CD4-positive, alpha-beta memory T cell (primary cell): ENCODE measurements at regions of chr5 and their contacts with region 1.

Region 1: GRCh38 chr5:159331093-159331973 is 1.0 kb upstream of the IL12B start:
- DNase-seq: peak; percentile 72 to 79 (median 74)
- H3K4me3 ChIP-seq: peak overlapping the region in 1 of 2 donors; percentile 46
- H3K4me3 Mint-ChIP-seq: peak overlapping the region; percentile 73 to 87 (median 80)
- H3K27ac ChIP-seq: peak overlapping the region; percentile 23
- H3K27ac Mint-ChIP-seq: peak overlapping the region; percentile 47 to 88 (median 80)
- H3K4me1 ChIP-seq: peaks cover 19% of the 10 kb centered on the region
- H3K4me1 Mint-ChIP-seq: peaks cover 15 to 39% (median 27%) of the 10 kb centered on the region in 4 donors
- H3K27me3 ChIP-seq: no peaks in the 10 kb centered on the region
- H3K27me3 Mint-ChIP-seq: peaks cover 0 to 2% of the 10 kb centered on the region in 2 donors

Region 2: DNA sequence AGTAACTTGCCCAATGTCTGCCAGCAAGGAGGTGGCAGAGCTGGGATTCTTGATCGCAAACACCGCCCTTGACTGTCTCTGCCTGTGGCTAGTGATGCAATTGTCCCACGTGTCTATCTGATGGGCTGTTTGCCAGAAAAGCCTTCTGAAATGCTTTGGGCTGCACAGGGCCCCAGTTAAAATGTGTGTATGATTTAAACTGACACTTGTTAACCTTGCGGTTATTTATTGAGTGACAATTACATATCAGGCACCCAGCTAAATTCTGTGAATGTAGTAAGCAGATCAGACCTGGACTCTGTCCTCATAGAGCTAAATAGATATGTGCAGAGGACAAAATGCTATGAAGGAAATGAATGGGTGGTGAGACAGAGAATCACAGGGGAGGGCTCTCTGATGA is 10.6 kb after region 1 on chr5:
- CTCF ChIA-PET with region 1: interaction called, 18 read pairs
- POLR2A ChIA-PET with region 1: interaction called, 3 read pairs
- intact Hi-C with region 1: no loop called
- DNase-seq: peak; percentile 74 to 92 (median 79)
- H3K4me3 ChIP-seq: no peak overlapping the region
- H3K4me3 Mint-ChIP-seq: peak overlapping the region in 7 of 8 donors; percentile 28 to 88 (median 47)
- H3K27ac ChIP-seq: no peak overlapping the region
- H3K27ac Mint-ChIP-seq: peak overlapping the region; percentile 79 to 98 (median 87)
- H3K4me1 ChIP-seq: peaks cover 66% of the 10 kb centered on the region
- H3K4me1 Mint-ChIP-seq: peaks cover 54 to 89% (median 67%) of the 10 kb centered on the region in 4 donors
- H3K27me3 ChIP-seq: no peaks in the 10 kb centered on the region
- H3K27me3 Mint-ChIP-seq: no peaks in the 10 kb centered on the region

Region 3: GRCh38 chr5:159427180-159428012 is 96.1 kb after region 1 on chr5:
- CTCF ChIA-PET with region 1: interaction called, 5 read pairs
- POLR2A ChIA-PET with region 1: no interaction called
- intact Hi-C with region 1: loop called (anchors 5 kb)
- DNase-seq: peak in 1 of 5 donors; percentile 25
- H3K4me3 ChIP-seq: no peak overlapping the region
- H3K4me3 Mint-ChIP-seq: peak overlapping the region in 6 of 8 donors; percentile 3 to 71 (median 31)
- H3K27ac ChIP-seq: no peak overlapping the region
- H3K27ac Mint-ChIP-seq: peak overlapping the region; percentile 1 to 92 (median 78)
- H3K4me1 ChIP-seq: peaks cover 21% of the 10 kb centered on the region
- H3K4me1 Mint-ChIP-seq: peaks cover 14 to 38% (median 22%) of the 10 kb centered on the region in 4 donors
- H3K27me3 ChIP-seq: no peaks in the 10 kb centered on the region
- H3K27me3 Mint-ChIP-seq: peaks cover 1% of the 10 kb centered on the region in 2 donors

Region 4: DNA sequence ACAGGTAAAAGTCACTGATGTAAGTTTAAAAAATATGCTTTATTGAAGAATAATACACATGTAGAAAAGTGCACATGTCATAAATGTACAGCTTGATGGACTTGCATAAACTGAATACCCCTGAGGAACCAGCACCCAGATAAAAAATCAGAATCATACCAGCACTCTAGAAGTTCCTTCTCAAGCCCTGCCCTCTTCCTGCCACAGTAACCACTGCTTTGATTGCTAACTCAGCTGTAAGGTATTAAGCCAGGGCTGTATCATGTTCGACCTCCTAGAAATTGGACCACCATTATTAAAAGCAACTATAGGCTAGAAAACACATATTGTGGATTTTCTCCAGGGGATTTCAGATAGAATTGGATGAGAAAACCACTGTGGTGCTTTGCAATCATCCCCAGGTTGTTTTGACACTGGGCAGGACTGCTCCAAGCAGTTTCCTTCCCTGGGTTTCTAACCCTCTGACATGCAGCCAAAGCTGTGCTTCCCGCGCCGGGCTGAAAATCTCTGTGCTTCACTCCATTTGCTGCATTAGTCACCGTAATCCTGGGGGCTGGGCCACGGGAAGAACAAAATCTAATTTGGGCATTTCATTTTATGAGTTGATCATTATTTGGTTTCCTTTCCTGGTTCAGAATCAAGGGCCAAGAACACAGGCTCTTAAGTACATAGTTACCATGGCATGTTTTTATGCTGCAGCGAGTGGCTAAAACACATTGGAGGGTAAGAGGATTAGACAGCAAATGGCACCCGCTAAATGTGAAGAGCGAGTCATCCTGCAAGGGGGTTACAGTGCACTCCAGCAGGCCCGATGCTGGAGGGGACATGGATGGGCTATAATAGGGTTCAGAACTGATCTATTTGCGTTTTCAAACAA is 138.4 kb after region 1 on chr5:
- CTCF ChIA-PET with region 1: no interaction called
- POLR2A ChIA-PET with region 1: no interaction called
- intact Hi-C with region 1: loop called (anchors 1 kb)
- DNase-seq: peak; percentile 11 to 49 (median 38)
- H3K4me3 ChIP-seq: peak overlapping the region in 1 of 2 donors; percentile 40
- H3K4me3 Mint-ChIP-seq: peak overlapping the region; percentile 44 to 75 (median 67)
- H3K27ac ChIP-seq: no peak overlapping the region
- H3K27ac Mint-ChIP-seq: peak overlapping the region in 5 of 7 donors; percentile 24 to 55 (median 42)
- H3K4me1 ChIP-seq: peaks cover 22% of the 10 kb centered on the region
- H3K4me1 Mint-ChIP-seq: peaks cover 16 to 32% (median 24%) of the 10 kb centered on the region in 4 donors
- H3K27me3 ChIP-seq: no peaks in the 10 kb centered on the region
- H3K27me3 Mint-ChIP-seq: no peaks in the 10 kb centered on the region

Region 5: GRCh38 chr5:159915904-159916840 is 584.8 kb after region 1 on chr5 and contains the start of gene ADRA1B:
- CTCF ChIA-PET with region 1: no interaction called
- POLR2A ChIA-PET with region 1: no interaction called
- intact Hi-C with region 1: loop called (anchors 1 kb)
- DNase-seq: peak in 4 of 5 donors; percentile 17 to 32 (median 26)
- H3K4me3 ChIP-seq: no peak within 1 kb of the TSS
- H3K4me3 Mint-ChIP-seq: peak within 1 kb of the TSS; percentile 7 to 82 (median 68)
- H3K27ac ChIP-seq: no peak within 1 kb of the TSS
- H3K27ac Mint-ChIP-seq: peak within 1 kb of the TSS in 2 of 7 donors; percentile 53 to 63
- H3K4me1 ChIP-seq: peaks cover 5% of the 10 kb centered on the region
- H3K4me1 Mint-ChIP-seq: peaks cover 7 to 16% (median 11%) of the 10 kb centered on the region in 4 donors
- H3K27me3 ChIP-seq: peaks cover 17% of the 10 kb centered on the region
- H3K27me3 Mint-ChIP-seq: peaks cover 42 to 64% of the 10 kb centered on the region in 2 donors
- total RNA-seq, gene ADRA1B: not detected